Left ventricle myocardium inferior (tissue), 1 donor: ENCODE measurements at regions of chr7 and their contacts with region 1.

Region 1: GRCh38 chr7:101815835-101816493 is 1.5 kb upstream of the CUX1 start:
- DNase-seq: peak; percentile 80
- H3K4me3 ChIP-seq: peak overlapping the region; percentile 92
- H3K27ac ChIP-seq: peak overlapping the region; percentile 82
- H3K4me1 ChIP-seq: peaks cover 59% of the 10 kb centered on the region
- H3K27me3 ChIP-seq: no peaks in the 10 kb centered on the region
- CTCF ChIP-seq: peak; percentile 33

Region 2: GRCh38 chr7:101688183-101688831 is 127.7 kb before region 1 on chr7:
- intact Hi-C with region 1: loop called (anchors 5 kb)
- DNase-seq: peak; percentile 81
- H3K4me3 ChIP-seq: peak overlapping the region; percentile 52
- H3K27ac ChIP-seq: no peak overlapping the region
- H3K4me1 ChIP-seq: peaks cover 20% of the 10 kb centered on the region
- H3K27me3 ChIP-seq: no peaks in the 10 kb centered on the region
- CTCF ChIP-seq: peak; percentile 96

Region 3: GRCh38 chr7:101702362-101702850 is 113.6 kb before region 1 on chr7:
- intact Hi-C with region 1: no loop called
- DNase-seq: no peak
- H3K4me3 ChIP-seq: no peak overlapping the region
- H3K27ac ChIP-seq: no peak overlapping the region
- H3K4me1 ChIP-seq: no peaks in the 10 kb centered on the region
- H3K27me3 ChIP-seq: peaks cover 84% of the 10 kb centered on the region
- CTCF ChIP-seq: no peak

Region 4: DNA sequence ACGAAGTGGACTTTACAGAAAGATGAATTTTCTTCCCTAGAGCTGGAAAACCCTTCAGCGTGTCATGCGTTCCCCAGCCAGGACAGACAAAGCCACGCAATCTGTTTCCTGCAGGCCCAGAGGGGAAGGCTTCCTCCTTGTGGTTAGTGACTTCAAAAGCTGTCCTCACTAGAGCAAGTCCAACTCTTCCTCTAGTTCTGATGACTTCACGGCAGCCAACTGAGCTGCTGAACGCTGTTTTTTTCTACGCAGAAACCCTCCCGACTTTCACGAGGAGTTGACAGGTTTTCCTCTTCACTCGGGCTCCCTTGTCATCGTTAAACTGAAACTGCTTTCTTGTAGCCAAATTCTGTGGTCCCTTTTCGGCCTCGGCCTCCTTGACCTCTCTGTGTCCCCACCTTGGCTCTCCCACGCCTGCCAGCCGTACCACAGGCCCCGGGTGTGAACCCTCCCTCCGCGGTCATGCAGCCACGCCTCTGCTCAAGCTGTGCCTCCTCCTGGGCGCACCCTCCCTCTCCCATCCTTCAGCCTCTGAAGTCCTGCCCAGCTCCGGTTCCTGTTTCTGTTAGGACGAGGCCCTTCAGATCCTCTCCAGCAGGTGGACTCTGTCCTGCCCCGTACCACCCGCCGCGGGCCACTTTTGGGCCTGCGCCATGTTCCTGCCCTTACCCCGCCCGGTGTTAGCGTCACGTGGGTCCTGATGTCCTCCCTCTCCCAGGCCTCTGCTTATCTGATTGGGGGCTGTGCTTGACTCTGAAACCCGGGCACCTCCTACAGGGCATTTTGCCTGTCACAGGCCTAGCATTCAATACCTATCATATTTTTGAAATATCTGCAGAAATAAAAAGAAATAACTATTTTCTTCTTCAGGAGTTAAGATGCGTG is 40.8 kb after region 1 on chr7:
- intact Hi-C with region 1: loop called (anchors 5 kb)
- DNase-seq: peak; percentile 89
- H3K4me3 ChIP-seq: peak overlapping the region; percentile 60
- H3K27ac ChIP-seq: peak overlapping the region; percentile 90
- H3K4me1 ChIP-seq: peaks cover 73% of the 10 kb centered on the region
- H3K27me3 ChIP-seq: no peaks in the 10 kb centered on the region
- CTCF ChIP-seq: peak; percentile 64

Region 5: GRCh38 chr7:102106625-102107024 is 290.7 kb after region 1 on chr7:
- intact Hi-C with region 1: loop called (anchors 5 kb)
- DNase-seq: no peak
- H3K4me3 ChIP-seq: no peak overlapping the region
- H3K27ac ChIP-seq: no peak overlapping the region
- H3K4me1 ChIP-seq: peaks cover 4% of the 10 kb centered on the region
- H3K27me3 ChIP-seq: no peaks in the 10 kb centered on the region
- CTCF ChIP-seq: no peak